Mammary epithelial cell (primary cell): ENCODE measurements at regions of chr12 and their contacts with region 1.

Region 1: GRCh38 chr12:108816652-108817335 is 40.6 kb downstream of the SSH1 start:
- DNase-seq: no peak
- H3K4me3 ChIP-seq: no peak overlapping the region
- H3K27ac ChIP-seq: peak overlapping the region; percentile 78
- H3K4me1 ChIP-seq: peaks cover 34% of the 10 kb centered on the region
- H3K27me3 ChIP-seq: no peaks in the 10 kb centered on the region
- CTCF ChIP-seq: no peak

Region 2: GRCh38 chr12:108744021-108744897 is 72.5 kb before region 1 on chr12:
- CTCF ChIA-PET with region 1: no interaction called
- dilution Hi-C with region 1: no loop called
- in situ Hi-C with region 1: no loop called
- intact Hi-C with region 1: no loop called
- DNase-seq: no peak
- H3K4me3 ChIP-seq: no peak overlapping the region
- H3K27ac ChIP-seq: no peak overlapping the region
- H3K4me1 ChIP-seq: no peaks in the 10 kb centered on the region
- H3K27me3 ChIP-seq: no peaks in the 10 kb centered on the region
- CTCF ChIP-seq: no peak

Region 3: DNA sequence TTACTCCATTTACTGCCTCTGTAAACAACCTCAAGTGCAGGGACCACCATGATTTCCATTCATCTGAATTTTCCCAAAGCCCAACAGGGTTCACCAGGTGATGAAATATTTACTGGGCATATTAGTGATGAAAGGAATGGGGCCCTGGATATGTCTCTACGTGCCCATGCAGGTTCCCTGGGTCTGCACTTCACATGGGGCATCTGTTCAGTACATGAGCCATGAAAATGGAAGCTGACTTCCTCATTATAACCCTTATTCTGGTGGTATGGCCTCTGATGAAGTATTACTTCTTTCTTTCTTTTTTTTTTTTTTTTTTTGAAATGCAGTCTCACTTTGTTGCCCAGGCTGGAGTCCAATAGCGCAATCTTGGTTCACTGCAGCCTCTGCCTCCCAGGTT is 58.9 kb before region 1 on chr12:
- CTCF ChIA-PET with region 1: no interaction called
- dilution Hi-C with region 1: no loop called
- in situ Hi-C with region 1: no loop called
- intact Hi-C with region 1: no loop called
- DNase-seq: peak; percentile 61
- H3K4me3 ChIP-seq: no peak overlapping the region
- H3K27ac ChIP-seq: no peak overlapping the region
- H3K4me1 ChIP-seq: peaks cover 7% of the 10 kb centered on the region
- H3K27me3 ChIP-seq: no peaks in the 10 kb centered on the region
- CTCF ChIP-seq: no peak

Region 4: GRCh38 chr12:108779998-108780688 is 36.7 kb before region 1 on chr12:
- CTCF ChIA-PET with region 1: no interaction called
- dilution Hi-C with region 1: loop called (anchors 5 kb)
- in situ Hi-C with region 1: no loop called
- intact Hi-C with region 1: no loop called
- DNase-seq: no peak
- H3K4me3 ChIP-seq: no peak overlapping the region
- H3K27ac ChIP-seq: no peak overlapping the region
- H3K4me1 ChIP-seq: no peaks in the 10 kb centered on the region
- H3K27me3 ChIP-seq: no peaks in the 10 kb centered on the region
- CTCF ChIP-seq: no peak

Region 5: GRCh38 chr12:108838194-108839017 is 21.6 kb after region 1 on chr12:
- CTCF ChIA-PET with region 1: interaction called, 3 read pairs
- dilution Hi-C with region 1: no loop called
- in situ Hi-C with region 1: no loop called
- intact Hi-C with region 1: loop called (anchors 1 kb)
- DNase-seq: peak; percentile 99
- H3K4me3 ChIP-seq: no peak overlapping the region
- H3K27ac ChIP-seq: peak overlapping the region; percentile 97
- H3K4me1 ChIP-seq: peaks cover 84% of the 10 kb centered on the region
- H3K27me3 ChIP-seq: no peaks in the 10 kb centered on the region
- CTCF ChIP-seq: no peak

Region 6: GRCh38 chr12:108856428-108857157 is 39.8 kb after region 1 on chr12:
- CTCF ChIA-PET with region 1: no interaction called
- dilution Hi-C with region 1: no loop called
- in situ Hi-C with region 1: no loop called
- intact Hi-C with region 1: loop called (anchors 1 kb)
- DNase-seq: peak; percentile 73
- H3K4me3 ChIP-seq: peak overlapping the region; percentile 83 to 94 (median 91)
- H3K27ac ChIP-seq: peak overlapping the region; percentile 97
- H3K4me1 ChIP-seq: peaks cover 28% of the 10 kb centered on the region
- H3K27me3 ChIP-seq: no peaks in the 10 kb centered on the region
- CTCF ChIP-seq: no peak

Region 7: DNA sequence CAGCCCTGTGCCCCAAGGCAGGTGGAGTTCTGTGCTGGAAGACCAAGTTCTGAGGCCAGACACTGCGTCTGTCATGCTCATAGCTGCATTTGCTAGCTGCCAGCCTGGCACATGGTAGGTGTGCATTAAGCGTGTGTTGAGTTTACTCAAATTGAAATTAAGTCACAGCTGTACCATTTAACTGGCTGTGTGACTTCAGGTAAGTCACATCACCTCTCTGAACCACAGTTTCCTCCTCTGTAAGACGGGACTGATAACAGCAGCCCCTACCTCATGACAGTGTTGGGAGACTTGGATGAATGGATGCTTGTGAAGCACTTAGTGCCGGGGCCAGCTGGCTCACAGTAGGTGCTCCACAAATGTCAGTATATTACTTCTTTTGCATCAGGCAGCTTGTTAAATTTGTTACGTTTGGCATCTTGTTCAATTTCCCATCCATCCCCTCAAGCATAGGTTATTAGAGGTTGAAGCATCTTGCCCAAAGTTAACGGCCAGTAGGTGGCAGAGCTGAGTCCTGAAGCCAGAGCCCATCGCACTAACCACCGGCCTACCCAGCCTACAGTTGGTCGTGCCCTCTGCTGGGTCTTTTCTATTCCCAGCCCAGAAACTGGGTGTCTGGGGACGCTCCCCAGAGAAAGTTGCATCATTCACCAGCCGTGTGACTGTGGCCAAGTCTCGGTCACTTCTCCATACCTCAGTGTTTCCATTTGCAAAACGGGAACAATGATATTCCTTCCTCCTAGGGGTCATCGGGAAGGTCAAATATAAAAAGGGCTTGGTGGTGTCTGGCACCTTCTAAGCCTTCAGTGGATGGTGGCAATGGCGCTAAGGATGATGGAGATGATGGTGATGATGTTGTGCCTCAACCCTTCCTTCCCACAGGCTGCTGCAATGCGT is 67.6 kb after region 1 on chr12:
- CTCF ChIA-PET with region 1: interaction called, 10 read pairs
- dilution Hi-C with region 1: no loop called
- in situ Hi-C with region 1: no loop called
- intact Hi-C with region 1: no loop called
- DNase-seq: peak; percentile 14
- H3K4me3 ChIP-seq: no peak overlapping the region
- H3K27ac ChIP-seq: no peak overlapping the region
- H3K4me1 ChIP-seq: peaks cover 2% of the 10 kb centered on the region
- H3K27me3 ChIP-seq: no peaks in the 10 kb centered on the region
- CTCF ChIP-seq: peak; percentile 65 to 72